ENCODE measurements at regions of chr11 and their contacts with region 1.

Region 1: DNA sequence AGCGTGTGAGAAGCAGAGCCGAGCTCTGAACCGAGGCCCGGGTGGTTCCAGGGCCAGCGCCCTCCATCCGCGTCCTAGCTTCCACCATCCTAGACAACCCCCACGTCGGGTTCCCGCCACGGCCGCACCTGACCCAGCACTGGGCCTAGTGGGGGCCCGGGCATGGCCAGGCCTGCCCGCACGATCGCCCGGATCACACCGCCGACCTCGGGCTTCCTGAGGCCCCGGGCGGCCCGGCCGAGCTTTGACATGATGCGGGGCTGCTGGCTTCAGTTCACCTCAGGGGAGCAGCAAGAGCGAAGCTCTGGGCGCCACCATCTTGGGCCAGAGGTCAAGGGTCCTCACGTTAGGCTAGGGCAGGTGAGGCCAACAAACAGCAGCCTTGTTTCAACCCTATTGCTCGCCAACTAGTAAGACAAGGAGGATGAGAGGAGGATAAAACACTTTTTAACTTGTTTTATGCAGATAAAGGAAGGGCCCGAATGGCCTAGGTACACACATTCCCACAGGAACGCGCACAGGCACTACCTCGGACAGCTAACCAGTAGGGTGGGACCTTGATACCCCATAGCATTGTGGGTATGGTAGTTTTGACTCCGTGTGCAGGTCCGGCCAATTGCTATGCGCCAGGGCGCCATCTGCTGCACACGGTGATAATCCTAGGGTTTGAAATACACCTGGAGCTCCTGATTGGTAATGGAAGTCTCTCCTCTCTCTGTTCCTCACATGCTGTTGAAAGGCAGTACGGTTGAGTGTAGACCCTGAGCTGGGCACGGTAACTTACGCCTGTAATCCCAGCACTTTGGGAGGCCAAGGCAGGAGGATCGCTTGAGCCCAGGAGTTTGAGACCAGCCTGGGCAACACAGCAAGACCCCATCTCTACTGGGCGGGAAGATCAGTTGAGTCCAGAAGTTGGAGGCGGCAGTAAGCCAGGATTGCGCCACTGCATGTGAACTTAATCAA is at the start of gene MRPL11:
- DNase-seq: peak; percentile 89 to 92 (median 91)
- H3K4me3 ChIP-seq: peak within 1 kb of the TSS; percentile 67 to 88
- H3K4me3 Mint-ChIP-seq: peak within 1 kb of the TSS; percentile 87 to 94 (median 91)
- H3K27ac ChIP-seq: peak within 1 kb of the TSS; percentile 69
- H3K27ac Mint-ChIP-seq: peak within 1 kb of the TSS; percentile 88 to 100 (median 98)
- H3K4me1 ChIP-seq: peaks cover 7% of the 10 kb centered on the region
- H3K4me1 Mint-ChIP-seq: peaks cover 6 to 17% (median 11%) of the 10 kb centered on the region in 4 donors
- H3K27me3 ChIP-seq: no peaks in the 10 kb centered on the region
- H3K27me3 Mint-ChIP-seq: peaks cover 2 to 3% of the 10 kb centered on the region in 2 donors
- total RNA-seq, gene MRPL11: 22.0 to 27.9 TPM

Region 2: GRCh38 chr11:66363805-66364535 is 74.8 kb before region 1 on chr11:
- CTCF ChIA-PET with region 1: no interaction called
- POLR2A ChIA-PET with region 1: no interaction called
- intact Hi-C with region 1: no loop called
- DNase-seq: peak; percentile 38 to 59 (median 46)
- H3K4me3 ChIP-seq: no peak overlapping the region
- H3K4me3 Mint-ChIP-seq: no peak overlapping the region
- H3K27ac ChIP-seq: no peak overlapping the region
- H3K27ac Mint-ChIP-seq: peak overlapping the region in 2 of 7 donors; percentile 12 to 16
- H3K4me1 ChIP-seq: no peaks in the 10 kb centered on the region
- H3K4me1 Mint-ChIP-seq: peaks cover 0 to 2% (median under 1%) of the 10 kb centered on the region in 4 donors
- H3K27me3 ChIP-seq: no peaks in the 10 kb centered on the region
- H3K27me3 Mint-ChIP-seq: no peaks in the 10 kb centered on the region

Region 3: GRCh38 chr11:66421492-66422205 is 17.1 kb before region 1 on chr11:
- CTCF ChIA-PET with region 1: interaction called, 10 read pairs
- POLR2A ChIA-PET with region 1: interaction called, 17 read pairs
- intact Hi-C with region 1: no loop called
- DNase-seq: peak; percentile 83 to 90 (median 85)
- H3K4me3 ChIP-seq: no peak overlapping the region
- H3K4me3 Mint-ChIP-seq: peak overlapping the region in 4 of 8 donors; percentile 30 to 64 (median 35)
- H3K27ac ChIP-seq: no peak overlapping the region
- H3K27ac Mint-ChIP-seq: peak overlapping the region in 4 of 7 donors; percentile 79 to 91 (median 88)
- H3K4me1 ChIP-seq: no peaks in the 10 kb centered on the region
- H3K4me1 Mint-ChIP-seq: peaks cover 6 to 23% (median 11%) of the 10 kb centered on the region in 4 donors
- H3K27me3 ChIP-seq: peaks cover 23% of the 10 kb centered on the region
- H3K27me3 Mint-ChIP-seq: peaks cover 23 to 28% of the 10 kb centered on the region in 2 donors

Region 4: GRCh38 chr11:66466225-66467027 is 27.6 kb after region 1 on chr11 and contains the start of gene PELI3:
- CTCF ChIA-PET with region 1: interaction called, 6 read pairs
- POLR2A ChIA-PET with region 1: interaction called, 20 read pairs
- intact Hi-C with region 1: loop called (anchors 1 kb)
- DNase-seq: peak; percentile 91 to 95 (median 92)
- H3K4me3 ChIP-seq: peak within 1 kb of the TSS; percentile 58 to 65
- H3K4me3 Mint-ChIP-seq: peak within 1 kb of the TSS; percentile 89 to 94 (median 90)
- H3K27ac ChIP-seq: peak within 1 kb of the TSS; percentile 81
- H3K27ac Mint-ChIP-seq: peak within 1 kb of the TSS; percentile 91 to 97 (median 95)
- H3K4me1 ChIP-seq: peaks cover 20% of the 10 kb centered on the region
- H3K4me1 Mint-ChIP-seq: peaks cover 13 to 33% (median 21%) of the 10 kb centered on the region in 4 donors
- H3K27me3 ChIP-seq: no peaks in the 10 kb centered on the region
- H3K27me3 Mint-ChIP-seq: no peaks in the 10 kb centered on the region
- total RNA-seq, gene PELI3: 25.3 to 25.9 TPM

Region 5: GRCh38 chr11:66631883-66632282 is 193.1 kb after region 1 on chr11:
- CTCF ChIA-PET with region 1: no interaction called
- POLR2A ChIA-PET with region 1: no interaction called
- intact Hi-C with region 1: no loop called
- DNase-seq: no peak
- H3K4me3 ChIP-seq: no peak overlapping the region
- H3K4me3 Mint-ChIP-seq: peak overlapping the region in 1 of 8 donors; percentile 4
- H3K27ac ChIP-seq: no peak overlapping the region
- H3K27ac Mint-ChIP-seq: peak overlapping the region in 5 of 7 donors; percentile 42 to 74 (median 63)
- H3K4me1 ChIP-seq: peaks cover 18% of the 10 kb centered on the region
- H3K4me1 Mint-ChIP-seq: peaks cover 22 to 58% (median 41%) of the 10 kb centered on the region in 4 donors
- H3K27me3 ChIP-seq: no peaks in the 10 kb centered on the region
- H3K27me3 Mint-ChIP-seq: no peaks in the 10 kb centered on the region

Region 6: DNA sequence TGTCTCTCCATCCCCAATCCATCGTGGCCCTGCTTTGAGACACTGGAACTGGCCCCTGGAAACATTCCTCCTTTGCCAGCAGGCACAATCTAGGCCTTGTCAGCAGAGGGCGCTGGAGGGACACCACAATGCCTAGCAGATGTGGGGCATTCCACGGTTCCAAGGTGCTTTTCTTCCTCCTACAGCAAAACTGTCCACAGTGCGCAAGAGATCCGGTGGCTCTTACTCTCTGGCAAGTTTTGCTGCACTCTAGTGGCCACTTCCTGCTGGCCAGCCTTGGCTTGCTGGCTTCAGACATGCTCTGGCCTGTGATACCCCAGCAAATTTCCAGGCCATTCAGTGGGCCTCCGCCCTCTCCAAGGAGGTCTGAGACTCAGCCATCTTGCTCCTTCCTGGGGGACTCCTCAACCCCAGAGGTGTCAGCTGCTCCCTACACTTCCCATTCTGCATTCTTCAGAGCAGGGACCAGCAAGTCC is 256.0 kb after region 1 on chr11:
- CTCF ChIA-PET with region 1: no interaction called
- POLR2A ChIA-PET with region 1: no interaction called
- intact Hi-C with region 1: no loop called
- DNase-seq: peak; percentile 76 to 86 (median 79)
- H3K4me3 ChIP-seq: no peak overlapping the region
- H3K4me3 Mint-ChIP-seq: no peak overlapping the region
- H3K27ac ChIP-seq: no peak overlapping the region
- H3K27ac Mint-ChIP-seq: no peak overlapping the region
- H3K4me1 ChIP-seq: no peaks in the 10 kb centered on the region
- H3K4me1 Mint-ChIP-seq: no peaks in the 10 kb centered on the region
- H3K27me3 ChIP-seq: no peaks in the 10 kb centered on the region
- H3K27me3 Mint-ChIP-seq: peaks cover 2% of the 10 kb centered on the region in 2 donors

Region 7: GRCh38 chr11:67648140-67649123 is 1209.6 kb after region 1 on chr11:
- CTCF ChIA-PET with region 1: no interaction called
- POLR2A ChIA-PET with region 1: no interaction called
- intact Hi-C with region 1: no loop called
- DNase-seq: peak in 4 of 5 donors; percentile 30 to 56 (median 47)
- H3K4me3 ChIP-seq: no peak overlapping the region
- H3K4me3 Mint-ChIP-seq: peak overlapping the region in 2 of 8 donors; percentile 36 to 65
- H3K27ac ChIP-seq: no peak overlapping the region
- H3K27ac Mint-ChIP-seq: peak overlapping the region in 4 of 7 donors; percentile 8 to 42 (median 20)
- H3K4me1 ChIP-seq: peaks cover 35% of the 10 kb centered on the region
- H3K4me1 Mint-ChIP-seq: peaks cover 20 to 44% (median 35%) of the 10 kb centered on the region in 4 donors
- H3K27me3 ChIP-seq: no peaks in the 10 kb centered on the region
- H3K27me3 Mint-ChIP-seq: no peaks in the 10 kb centered on the region